Activated B cell treated with CpG ODN at 0.5 μM for 24 hours (primary cell): ENCODE measurements at regions of chr18 and their contacts with region 1.

Region 1: DNA sequence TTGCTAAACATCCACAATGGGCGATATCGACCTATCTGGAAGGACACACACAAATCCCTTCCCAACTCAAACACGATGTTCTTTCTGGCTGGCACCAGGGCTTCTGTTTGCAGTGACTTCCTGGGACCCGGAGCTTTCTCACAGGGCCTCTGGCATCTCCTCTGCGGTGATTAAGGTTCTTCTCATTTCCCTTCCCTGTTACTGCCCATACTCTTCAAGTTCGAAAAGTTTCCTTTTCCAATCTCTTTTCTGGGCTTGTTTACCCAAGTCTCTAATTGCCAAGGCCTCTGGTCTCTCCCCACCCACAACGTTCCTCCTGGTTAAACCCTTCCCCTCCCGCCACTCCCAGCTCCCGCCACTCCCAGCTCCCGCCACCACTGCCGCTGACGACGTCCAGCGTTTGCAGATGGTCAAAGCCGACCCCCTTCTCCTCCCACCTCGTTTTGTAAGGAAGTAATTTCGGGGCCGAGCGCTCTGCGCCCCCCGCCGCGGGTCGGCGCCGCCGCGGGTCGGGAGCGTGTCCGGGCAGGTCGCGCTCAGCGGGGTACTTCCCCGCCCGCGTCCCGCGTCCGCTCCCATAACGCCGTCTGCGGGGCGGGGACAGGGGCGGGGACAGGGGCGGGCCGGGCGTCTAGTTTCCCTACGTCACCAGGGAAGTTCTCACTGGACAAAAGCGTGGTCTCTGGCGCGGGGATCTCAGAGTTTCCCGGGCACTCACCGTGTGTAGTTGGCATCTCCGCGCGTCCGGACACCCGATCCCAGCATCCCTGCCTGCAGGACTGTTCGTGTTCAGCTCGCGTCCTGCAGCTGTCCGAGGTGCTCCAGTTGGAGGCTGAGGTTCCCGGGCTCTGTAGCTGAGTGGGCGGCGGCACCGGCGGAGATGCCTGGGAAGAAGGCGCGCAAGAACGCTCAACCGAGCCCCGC is at the start of gene PMAIP1:
- DNase-seq: peak; percentile 89
- ATAC-seq: peak; percentile 80
- H3K4me3 Mint-ChIP-seq: peak within 1 kb of the TSS; percentile 92
- H3K27ac Mint-ChIP-seq: peak within 1 kb of the TSS; percentile 99
- H3K4me1 Mint-ChIP-seq: peaks cover 40% of the 10 kb centered on the region
- H3K27me3 Mint-ChIP-seq: no peaks in the 10 kb centered on the region
- CTCF ChIP-seq: no peak
- total RNA-seq, gene PMAIP1: 68.5 and 69.9 TPM in 2 replicates

Region 2: GRCh38 chr18:59837586-59837985 is 62.0 kb before region 1 on chr18:
- CTCF ChIA-PET with region 1: interaction called, 4 read pairs
- POLR2A ChIA-PET with region 1: interaction called, 26 read pairs
- intact Hi-C with region 1: loop called (anchors 1 kb)
- DNase-seq: no peak
- ATAC-seq: peak; percentile 69
- H3K4me3 Mint-ChIP-seq: no peak overlapping the region
- H3K27ac Mint-ChIP-seq: no peak overlapping the region
- H3K4me1 Mint-ChIP-seq: peaks cover 27% of the 10 kb centered on the region
- H3K27me3 Mint-ChIP-seq: no peaks in the 10 kb centered on the region
- CTCF ChIP-seq: peak; percentile 47

Region 3: GRCh38 chr18:59876310-59876626 is 23.3 kb before region 1 on chr18:
- CTCF ChIA-PET with region 1: no interaction called
- POLR2A ChIA-PET with region 1: interaction called, 122 read pairs
- intact Hi-C with region 1: no loop called
- DNase-seq: no peak
- ATAC-seq: peak; percentile 31
- H3K4me3 Mint-ChIP-seq: peak overlapping the region; percentile 17
- H3K27ac Mint-ChIP-seq: peak overlapping the region; percentile 79
- H3K4me1 Mint-ChIP-seq: peaks cover 38% of the 10 kb centered on the region
- H3K27me3 Mint-ChIP-seq: no peaks in the 10 kb centered on the region
- CTCF ChIP-seq: no peak

Region 4: DNA sequence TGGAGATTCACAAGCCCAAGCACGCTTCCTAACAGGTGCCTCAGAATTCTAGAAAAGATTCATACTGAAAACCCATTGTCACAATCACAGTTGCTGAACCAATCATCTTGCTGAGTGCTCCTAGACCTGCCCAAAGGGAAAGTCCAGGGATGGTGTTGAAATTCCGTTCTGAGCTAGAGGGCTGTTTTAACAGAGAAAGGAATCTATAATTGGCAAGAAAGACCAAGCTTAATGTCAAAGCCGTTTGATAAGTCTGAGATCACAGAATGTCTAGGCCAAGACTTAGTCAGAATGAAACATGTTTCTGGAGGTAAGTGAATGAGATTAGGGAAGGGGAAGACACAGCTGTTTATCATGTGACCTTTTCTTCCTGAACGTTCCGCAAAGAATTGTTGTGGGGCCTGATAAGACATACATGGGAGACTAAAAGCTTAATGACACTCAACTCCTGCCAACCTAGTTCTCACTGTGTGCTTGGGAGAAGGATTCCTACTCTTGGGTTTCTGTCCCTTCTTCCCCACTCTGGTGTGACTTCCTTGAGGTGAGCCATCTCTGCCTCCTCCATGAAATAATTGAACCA is 27.8 kb after region 1 on chr18:
- CTCF ChIA-PET with region 1: no interaction called
- POLR2A ChIA-PET with region 1: interaction called, 103 read pairs
- intact Hi-C with region 1: no loop called
- DNase-seq: no peak
- ATAC-seq: peak; percentile 65
- H3K4me3 Mint-ChIP-seq: peak overlapping the region; percentile 9
- H3K27ac Mint-ChIP-seq: peak overlapping the region; percentile 79
- H3K4me1 Mint-ChIP-seq: peaks cover 29% of the 10 kb centered on the region
- H3K27me3 Mint-ChIP-seq: no peaks in the 10 kb centered on the region
- CTCF ChIP-seq: no peak

Region 5: GRCh38 chr18:59988098-59988706 is 88.6 kb after region 1 on chr18:
- CTCF ChIA-PET with region 1: interaction called, 12 read pairs
- POLR2A ChIA-PET with region 1: interaction called, 25 read pairs
- intact Hi-C with region 1: loop called (anchors 1 kb)
- DNase-seq: no peak
- ATAC-seq: peak; percentile 64
- H3K4me3 Mint-ChIP-seq: no peak overlapping the region
- H3K27ac Mint-ChIP-seq: no peak overlapping the region
- H3K4me1 Mint-ChIP-seq: no peaks in the 10 kb centered on the region
- H3K27me3 Mint-ChIP-seq: peaks cover 17% of the 10 kb centered on the region
- CTCF ChIP-seq: peak; percentile 100